GM13977 (cell line): ENCODE measurements at regions of chr1 and their contacts with region 1.

Region 1: DNA sequence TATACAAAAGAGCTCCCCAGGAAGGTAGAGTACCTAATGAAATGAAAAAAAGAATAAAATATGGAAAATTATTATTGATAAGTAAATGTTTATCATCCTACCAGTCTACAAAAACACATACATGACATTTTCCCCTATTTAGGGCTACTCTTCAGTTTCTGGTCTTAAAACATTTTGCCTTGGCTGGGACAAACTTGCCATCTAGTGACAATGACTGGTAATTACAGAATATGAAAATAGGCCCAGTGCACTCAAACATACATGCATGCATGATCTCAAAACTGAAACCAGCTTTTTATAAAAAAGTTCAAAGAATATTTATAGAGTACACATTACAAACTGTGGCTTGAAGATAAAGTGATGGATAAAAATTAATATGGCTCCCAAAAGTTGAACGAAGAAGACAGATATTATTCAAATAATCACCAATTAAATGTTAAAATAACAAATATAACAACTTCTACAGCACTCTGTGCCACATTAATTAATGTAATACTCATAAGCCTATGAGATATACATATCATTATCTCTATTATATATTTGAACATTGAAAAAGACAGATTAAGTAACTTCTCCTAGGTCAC is 10.5 kb upstream of the RNPC3 start:
- DNase-seq: peak; percentile 9
- CTCF ChIP-seq: peak; percentile 69

Region 2: GRCh38 chr1:103106426-103107341 is 408.3 kb before region 1 on chr1:
- in situ Hi-C with region 1: loop called (anchors 25 kb)
- DNase-seq: peak; percentile 34
- CTCF ChIP-seq: peak; percentile 38